Panc1 (cell line): ENCODE measurements at regions of chrX and their contacts with region 1.

Region 1: GRCh38 chrX:71128915-71129765 is 10.7 kb downstream of the MED12 start:
- DNase-seq: no peak
- ATAC-seq: peak; percentile 94
- H3K4me3 ChIP-seq: no peak overlapping the region
- H3K27ac ChIP-seq: no peak overlapping the region
- H3K4me1 ChIP-seq: no peaks in the 10 kb centered on the region
- H3K27me3 ChIP-seq: no peaks in the 10 kb centered on the region
- CTCF ChIP-seq: peak; percentile 89

Region 2: DNA sequence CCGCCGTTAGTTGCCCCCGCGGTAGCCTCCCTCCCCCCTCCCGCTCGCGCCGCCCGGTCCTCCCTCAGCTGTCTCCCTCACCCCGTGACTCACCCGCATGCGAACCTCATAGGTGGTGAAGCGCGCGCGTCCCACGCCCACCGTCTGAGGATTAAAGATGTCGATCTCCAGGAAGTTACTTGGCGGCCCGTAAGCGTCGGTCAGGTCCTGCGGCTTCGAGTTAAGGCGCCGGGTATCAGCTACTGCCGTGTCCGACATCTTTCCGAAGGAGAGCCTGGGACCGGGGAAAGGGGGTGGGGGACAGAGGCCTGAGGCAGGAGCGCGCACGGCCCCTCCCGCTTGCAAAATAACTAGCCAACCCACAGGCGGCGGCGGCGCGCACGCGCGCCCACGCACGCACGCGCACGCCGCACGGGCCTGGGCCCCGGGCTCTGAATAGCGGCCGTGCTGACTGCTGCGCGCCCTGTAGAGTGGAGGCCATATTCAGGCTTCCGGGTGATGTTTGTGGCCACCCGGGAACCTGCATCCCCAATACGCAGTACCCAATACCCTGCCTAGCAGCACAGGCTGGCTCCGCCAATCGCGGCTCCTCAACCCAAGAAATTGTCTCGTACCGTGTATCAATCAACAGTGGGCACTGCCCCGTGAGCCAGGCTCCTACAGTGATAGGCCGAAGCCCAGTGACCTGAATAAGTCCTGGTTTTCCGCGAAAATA is 60.9 kb before region 1 on chrX and contains the start of gene SNX12:
- CTCF ChIA-PET with region 1: no interaction called
- POLR2A ChIA-PET with region 1: interaction called, 12 read pairs
- in situ Hi-C with region 1: no loop called
- intact Hi-C with region 1: no loop called
- DNase-seq: peak; percentile 76
- ATAC-seq: peak; percentile 97
- H3K4me3 ChIP-seq: peak within 1 kb of the TSS; percentile 58 to 87
- H3K27ac ChIP-seq: peak within 1 kb of the TSS; percentile 94
- H3K4me1 ChIP-seq: 0 out of 2 replicates have a peak, but pooled peaks cover 3% of the 10 kb centered on the region
- H3K27me3 ChIP-seq: peaks cover under 1% of the 10 kb centered on the region; the same call in 1 of the 2 replicates
- CTCF ChIP-seq: no peak
- total RNA-seq, gene SNX12: 117 TPM

Region 3: DNA sequence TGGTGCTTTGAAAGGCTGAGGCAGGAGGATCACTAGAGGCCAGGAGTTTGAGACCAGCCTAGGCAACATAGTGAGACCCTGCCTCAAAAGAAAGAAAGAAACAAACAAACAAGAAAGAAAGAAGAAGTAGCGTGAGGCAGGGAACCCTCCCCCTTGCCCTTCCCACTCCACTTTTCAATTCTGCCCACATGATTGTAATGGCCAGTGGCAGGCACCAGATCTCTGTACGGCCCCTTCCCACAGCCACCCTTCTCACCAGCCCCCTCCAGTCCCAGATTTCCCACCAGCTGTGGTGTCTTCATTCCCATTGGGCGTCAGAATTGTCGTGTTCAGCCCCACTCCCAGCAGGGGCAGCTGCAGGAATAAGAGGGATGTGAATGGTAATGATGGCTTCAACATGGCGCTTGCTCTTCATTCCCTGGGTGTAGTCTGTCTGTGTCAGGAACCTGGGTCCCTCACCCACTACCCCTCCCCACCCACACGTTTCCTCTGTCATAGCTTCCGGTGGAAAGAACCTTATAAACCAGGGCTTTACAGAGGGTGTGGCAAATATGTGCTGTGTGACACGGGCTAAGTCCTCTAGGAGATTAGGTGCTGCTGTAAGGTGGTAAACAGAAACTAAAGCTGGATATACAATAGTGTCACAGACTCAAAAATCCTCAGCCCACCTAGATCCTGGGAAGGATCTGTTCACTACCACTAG is 17.8 kb before region 1 on chrX and contains the start of gene IL2RG:
- CTCF ChIA-PET with region 1: interaction called, 14 read pairs
- POLR2A ChIA-PET with region 1: interaction called, 10 read pairs
- in situ Hi-C with region 1: no loop called
- intact Hi-C with region 1: no loop called
- DNase-seq: no peak
- ATAC-seq: no peak
- H3K4me3 ChIP-seq: no peak within 1 kb of the TSS
- H3K27ac ChIP-seq: no peak within 1 kb of the TSS
- H3K4me1 ChIP-seq: no peaks in the 10 kb centered on the region
- H3K27me3 ChIP-seq: no peaks in the 10 kb centered on the region
- CTCF ChIP-seq: no peak
- total RNA-seq, gene IL2RG: 0.28 TPM

Region 4: DNA sequence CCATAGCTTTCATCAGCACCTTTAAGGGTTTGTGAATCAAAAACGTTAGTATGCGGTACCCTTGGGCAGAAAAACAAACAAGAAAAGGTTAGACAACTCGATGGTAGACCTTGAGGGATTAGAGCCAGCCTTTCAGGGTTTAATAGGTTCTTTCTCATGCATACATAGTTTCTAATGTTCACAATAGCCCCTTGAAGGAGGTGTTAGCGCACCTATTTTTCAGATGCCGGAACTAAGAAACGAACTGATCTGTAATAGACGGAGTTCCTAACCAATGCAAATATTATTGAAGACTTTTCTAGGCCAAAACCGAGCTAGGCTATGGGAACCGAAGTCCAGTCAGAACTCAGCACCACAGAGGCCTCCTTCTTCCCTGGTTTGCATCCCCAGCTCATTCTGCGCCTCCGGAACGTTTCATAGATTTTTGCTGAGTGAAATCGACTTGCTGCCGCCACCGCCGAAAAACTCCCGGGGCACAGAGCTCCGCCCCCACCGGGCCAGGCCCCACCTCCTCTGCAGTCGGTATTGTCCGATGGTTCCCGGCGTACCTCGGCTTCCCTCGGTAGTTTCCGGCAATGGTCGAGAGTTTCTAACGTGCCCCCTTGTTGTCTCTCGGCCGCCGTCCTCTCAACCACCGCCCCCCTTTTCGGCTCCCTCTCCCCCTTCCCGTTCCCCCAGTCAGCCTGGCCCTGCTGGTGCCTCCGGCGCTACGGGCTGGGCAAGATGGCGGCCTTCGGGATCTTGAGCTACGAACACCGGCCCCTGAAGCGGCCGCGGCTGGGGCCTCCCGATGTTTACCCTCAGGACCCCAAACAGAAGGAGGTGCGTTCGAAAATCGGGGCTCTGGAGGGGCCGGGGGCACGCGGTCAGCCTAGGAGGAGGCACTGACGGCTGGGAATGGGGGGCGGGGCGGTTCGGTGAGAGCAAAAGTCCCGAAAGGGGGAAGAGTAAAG is 10.8 kb before region 1 on chrX and contains the start of gene MED12:
- CTCF ChIA-PET with region 1: no interaction called
- POLR2A ChIA-PET with region 1: interaction called, 10 read pairs
- in situ Hi-C with region 1: no loop called
- intact Hi-C with region 1: no loop called
- DNase-seq: no peak
- ATAC-seq: peak; percentile 99
- H3K4me3 ChIP-seq: peak within 1 kb of the TSS; percentile 75 to 81
- H3K27ac ChIP-seq: peak within 1 kb of the TSS; percentile 81
- H3K4me1 ChIP-seq: peaks cover 5% of the 10 kb centered on the region
- H3K27me3 ChIP-seq: no peaks in the 10 kb centered on the region
- CTCF ChIP-seq: no peak
- total RNA-seq, gene MED12: 42.0 TPM

Region 5: DNA sequence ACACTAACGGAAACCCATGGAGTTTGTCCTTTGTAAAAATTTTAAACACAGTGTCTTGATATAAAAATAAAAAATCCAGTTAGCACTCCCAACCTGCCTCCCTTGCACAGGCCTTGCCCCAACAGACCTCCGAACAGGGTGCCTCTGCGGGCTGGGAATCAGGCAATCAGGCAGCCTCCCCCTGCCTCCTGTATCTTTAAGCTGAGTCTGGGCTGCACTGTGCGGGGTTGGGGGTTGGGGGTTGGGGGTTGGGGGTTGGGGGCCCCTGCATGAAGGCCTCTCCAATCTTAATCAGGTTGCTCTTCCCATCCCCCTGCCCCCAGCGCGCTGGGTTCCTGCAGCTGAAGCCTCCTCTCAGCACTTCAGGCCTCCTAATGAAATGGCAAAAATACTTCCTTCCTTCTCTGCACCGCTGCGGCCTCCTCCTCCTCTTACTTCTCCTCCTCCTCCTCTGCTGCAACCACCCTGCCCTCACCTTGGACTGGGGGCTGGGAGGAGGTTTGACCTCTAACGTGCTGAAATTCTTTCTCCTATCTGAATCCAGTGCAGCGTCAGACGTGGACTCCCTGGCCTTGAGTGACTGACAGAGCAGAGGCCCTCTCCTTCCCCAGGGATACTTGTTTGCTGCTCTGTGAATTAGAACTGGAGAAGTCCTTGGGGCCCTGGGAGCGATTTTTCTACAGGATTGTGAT is 42.1 kb after region 1 on chrX:
- CTCF ChIA-PET with region 1: no interaction called
- POLR2A ChIA-PET with region 1: no interaction called
- in situ Hi-C with region 1: no loop called
- intact Hi-C with region 1: no loop called
- DNase-seq: no peak
- ATAC-seq: no peak
- H3K4me3 ChIP-seq: no peak overlapping the region
- H3K27ac ChIP-seq: no peak overlapping the region
- H3K4me1 ChIP-seq: no peaks in the 10 kb centered on the region
- H3K27me3 ChIP-seq: no peaks in the 10 kb centered on the region
- CTCF ChIP-seq: no peak